GM23248 (cell line): ENCODE measurements at regions of chr13 and their contacts with region 1.

Region 1: GRCh38 chr13:27826379-27827353 is 34.4 kb downstream of the GSX1 start:
- DNase-seq: peak; percentile 91
- H3K4me3 ChIP-seq: peak overlapping the region; percentile 61
- H3K27ac ChIP-seq: no peak overlapping the region
- H3K4me1 ChIP-seq: no peaks in the 10 kb centered on the region
- H3K27me3 ChIP-seq: peaks cover 56% of the 10 kb centered on the region

Region 2: GRCh38 chr13:26971990-26972887 is 854.4 kb before region 1 on chr13:
- in situ Hi-C with region 1: loop called (anchors 25 kb)
- DNase-seq: peak; percentile 40
- H3K4me3 ChIP-seq: no peak overlapping the region
- H3K27ac ChIP-seq: no peak overlapping the region
- H3K4me1 ChIP-seq: no peaks in the 10 kb centered on the region
- H3K27me3 ChIP-seq: peaks cover 14% of the 10 kb centered on the region

Region 3: DNA sequence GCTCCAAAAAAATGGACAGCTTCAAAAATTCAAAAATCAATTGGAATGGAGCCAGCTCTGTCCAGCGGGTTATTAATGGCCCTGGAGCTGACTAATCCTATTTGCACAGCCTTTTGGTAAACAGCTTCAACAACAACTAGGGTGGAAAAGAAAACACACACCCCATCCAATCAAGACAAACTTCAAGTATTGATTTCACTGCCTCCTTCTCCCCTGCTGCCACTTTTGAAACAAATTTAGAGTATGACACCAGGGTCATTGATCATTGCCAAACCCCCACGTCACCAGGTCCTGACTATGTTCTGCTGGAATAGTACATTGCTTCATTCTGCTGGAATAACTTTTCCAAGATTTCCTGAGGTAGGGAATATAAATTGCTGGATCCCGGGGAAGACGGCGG is 459.1 kb before region 1 on chr13:
- in situ Hi-C with region 1: loop called (anchors 5 kb)
- DNase-seq: no peak
- H3K4me3 ChIP-seq: no peak overlapping the region
- H3K27ac ChIP-seq: no peak overlapping the region
- H3K4me1 ChIP-seq: no peaks in the 10 kb centered on the region
- H3K27me3 ChIP-seq: peaks cover 19% of the 10 kb centered on the region

Region 4: DNA sequence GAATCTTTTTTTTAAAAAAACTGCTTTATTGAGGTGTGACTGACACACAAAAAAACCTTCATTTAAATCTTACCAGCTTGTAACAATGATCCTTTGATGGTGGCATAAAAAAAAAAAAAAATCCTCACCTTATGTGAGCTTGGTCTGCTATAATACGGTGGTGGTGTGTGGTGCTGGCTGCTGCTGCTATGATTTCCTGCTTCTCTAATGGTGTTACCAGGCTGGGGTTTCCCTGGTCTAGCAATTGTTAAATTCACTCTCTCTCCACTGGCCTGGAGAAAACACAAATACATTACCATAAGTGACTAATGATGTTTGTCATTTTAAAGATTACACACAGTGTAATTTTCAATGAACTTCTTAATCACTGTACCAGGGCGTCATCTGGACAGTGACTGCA is 267.0 kb before region 1 on chr13:
- in situ Hi-C with region 1: no loop called
- DNase-seq: no peak
- H3K4me3 ChIP-seq: no peak overlapping the region
- H3K27ac ChIP-seq: no peak overlapping the region
- H3K4me1 ChIP-seq: peaks cover 4% of the 10 kb centered on the region; the same call in 1 of the 2 replicates
- H3K27me3 ChIP-seq: no peaks in the 10 kb centered on the region

Region 5: GRCh38 chr13:27980280-27980998 is 153.8 kb after region 1 on chr13:
- in situ Hi-C with region 1: loop called (anchors 10 kb)
- DNase-seq: no peak
- H3K4me3 ChIP-seq: no peak overlapping the region
- H3K27ac ChIP-seq: no peak overlapping the region
- H3K4me1 ChIP-seq: no peaks in the 10 kb centered on the region
- H3K27me3 ChIP-seq: peaks cover 77% of the 10 kb centered on the region

Region 6: GRCh38 chr13:28313579-28313978 is 486.9 kb after region 1 on chr13:
- in situ Hi-C with region 1: no loop called
- DNase-seq: peak; percentile 54
- H3K4me3 ChIP-seq: no peak overlapping the region
- H3K27ac ChIP-seq: no peak overlapping the region
- H3K4me1 ChIP-seq: peaks cover 5% of the 10 kb centered on the region
- H3K27me3 ChIP-seq: no peaks in the 10 kb centered on the region